Dorsolateral prefrontal cortex (tissue), 120 donors: ENCODE measurements at regions of chr3 and their contacts with region 1.

Region 1: GRCh38 chr3:64621726-64622395 is 65.9 kb downstream of the ADAMTS9 start:
- DNase-seq: no peak
- H3K4me3 ChIP-seq: no peak overlapping the region
- H3K27ac ChIP-seq: no peak overlapping the region
- H3K27me3 ChIP-seq: no peaks in the 10 kb centered on the region
- CTCF ChIP-seq: no peak

Region 2: GRCh38 chr3:64685800-64686445 is 64.1 kb after region 1 on chr3:
- intact Hi-C with region 1: loop called in 1 of 2 experiments (anchors 2 kb)
- DNase-seq: peak in 9 of 10 donors; percentile 13 to 81 (median 68)
- H3K4me3 ChIP-seq: peak overlapping the region; percentile 42 to 79 (median 64)
- H3K27ac ChIP-seq: peak overlapping the region in 57 of 59 donors; percentile 55 to 95 (median 84)
- H3K27me3 ChIP-seq: peaks cover 0 to 67% (median 31%) of the 10 kb centered on the region in 45 donors
- CTCF ChIP-seq: peak in 53 of 56 donors; percentile 10 to 66 (median 36)